Left cardiac atrium (tissue), 4 donors: ENCODE measurements at regions of chr3 and their contacts with region 1.

Region 1: DNA sequence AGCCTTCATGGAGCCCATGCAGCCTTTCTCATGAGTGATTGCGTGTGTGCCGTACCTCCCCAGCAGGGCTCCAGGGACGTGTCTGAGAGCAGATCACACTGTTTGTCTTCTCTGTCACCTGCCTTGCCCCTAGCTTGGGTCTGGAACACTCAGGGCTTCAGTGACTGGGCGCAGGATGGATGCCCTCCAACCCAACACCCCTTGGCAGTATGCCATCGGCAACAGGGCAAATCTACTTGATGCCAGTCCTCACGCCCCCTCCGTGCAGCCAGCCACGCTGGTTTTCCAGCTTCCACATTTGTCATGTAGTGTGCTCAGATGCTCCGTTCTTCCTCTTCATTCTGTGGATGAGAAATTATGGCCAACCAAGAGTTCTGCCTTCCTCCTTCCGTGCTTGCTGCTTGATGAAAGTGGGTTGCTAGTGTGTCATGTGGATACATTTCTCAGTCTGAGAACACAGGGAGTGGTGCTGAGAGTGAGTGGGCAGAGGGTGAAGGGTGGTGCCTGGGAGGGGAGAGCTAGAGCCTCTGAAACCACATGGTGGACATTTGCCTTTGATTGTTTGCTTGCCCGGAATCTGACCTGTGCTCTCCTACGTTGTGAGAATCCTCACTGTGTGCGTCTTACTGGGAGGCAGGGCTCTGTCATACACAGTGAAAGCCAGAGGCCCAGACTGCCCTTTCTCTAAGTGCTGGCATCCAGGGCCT is 97.2 kb downstream of the FAM43A start:
- DNase-seq: no peak
- ATAC-seq: peak in 1 of 2 donors; percentile 29

Region 2: DNA sequence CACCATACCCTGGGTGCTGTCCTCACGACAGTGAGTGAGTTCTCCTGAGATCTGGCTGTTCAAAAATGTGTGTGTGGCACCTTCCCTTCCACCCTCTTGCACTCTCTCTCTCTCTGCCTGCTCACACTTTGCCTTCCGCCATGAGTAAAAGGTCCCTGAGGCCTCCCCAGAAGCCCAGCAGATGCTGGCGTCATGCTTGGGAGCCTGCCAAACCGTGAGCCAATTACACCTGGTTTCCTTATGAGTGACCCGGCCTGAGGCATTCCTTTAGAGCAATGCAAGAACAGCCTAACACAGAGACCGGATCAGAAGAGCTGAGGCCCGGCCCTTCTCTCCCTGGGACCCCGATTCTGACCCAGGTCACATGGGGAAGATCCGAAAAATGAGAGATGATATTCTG is 165.0 kb before region 1 on chr3:
- intact Hi-C with region 1: no loop called
- DNase-seq: no peak
- ATAC-seq: no peak

Region 3: GRCh38 chr3:194814878-194815357 is 32.1 kb after region 1 on chr3:
- intact Hi-C with region 1: loop called in 1 of 2 experiments (anchors 5 kb)
- DNase-seq: no peak
- ATAC-seq: peak in 1 of 2 donors; percentile 53